Gastrocnemius medialis (tissue), 4 donors: ENCODE measurements at regions of chr6 and their contacts with region 1.

Region 1: DNA sequence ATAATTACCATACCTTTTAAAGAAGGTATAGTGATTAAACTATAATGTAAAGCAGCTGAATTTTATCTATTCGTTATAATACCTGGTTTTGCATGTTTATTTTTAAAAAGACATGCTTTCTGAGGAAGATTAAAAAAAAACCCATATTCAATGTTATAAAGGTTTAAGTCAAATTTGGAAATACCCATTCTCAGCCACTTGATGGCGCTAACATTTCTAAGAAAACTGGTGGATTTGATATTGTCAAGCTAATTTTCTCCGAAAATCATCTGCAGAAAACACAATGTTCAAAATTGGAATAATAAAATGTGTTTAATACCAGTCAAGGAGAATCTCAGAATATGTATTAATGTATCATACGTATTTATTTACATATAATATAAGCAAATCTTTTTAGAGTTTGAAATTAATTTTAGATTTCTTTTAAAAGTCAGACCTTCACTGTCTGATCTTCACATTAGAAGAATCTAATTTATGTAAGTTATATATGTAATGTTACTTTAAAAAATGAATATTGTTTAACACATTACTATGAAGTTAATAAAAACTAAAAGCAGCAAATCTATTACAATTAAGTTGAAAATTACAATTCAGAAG is 35.0 kb downstream of the SHPRH start:
- DNase-seq: no peak
- ATAC-seq: no peak
- H3K4me3 ChIP-seq: no peak overlapping the region
- H3K27ac ChIP-seq: no peak overlapping the region
- H3K4me1 ChIP-seq: no peaks in the 10 kb centered on the region
- H3K27me3 ChIP-seq: no peaks in the 10 kb centered on the region
- CTCF ChIP-seq: peak in 4 of 5 experiments; percentile 34 to 59 (median 52)
- POLR2A ChIP-seq: no peak

Region 2: DNA sequence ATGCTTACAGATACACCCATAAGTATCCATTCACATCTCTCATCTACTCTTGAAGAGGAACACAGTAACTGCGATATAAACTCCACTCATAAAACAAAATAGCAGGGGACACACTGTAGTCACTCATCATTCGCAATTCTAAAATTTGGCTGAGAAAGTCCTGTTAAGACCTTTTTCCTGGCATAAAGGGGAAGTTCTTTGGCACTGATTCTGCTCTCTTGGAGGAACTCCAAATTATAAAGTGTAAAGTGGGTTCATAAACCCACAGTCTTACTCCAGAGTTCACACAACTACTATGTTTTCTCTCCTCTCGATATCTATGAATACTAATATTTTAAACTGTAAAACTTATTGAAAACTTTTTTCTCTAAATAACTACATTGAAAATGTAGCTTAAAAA is 750.3 kb after region 1 on chr6:
- in situ Hi-C with region 1: loop called in 2 of 4 experiments (anchors 25 kb)
- intact Hi-C with region 1: no loop called
- DNase-seq: no peak
- ATAC-seq: no peak
- H3K4me3 ChIP-seq: no peak overlapping the region
- H3K27ac ChIP-seq: no peak overlapping the region
- H3K4me1 ChIP-seq: no peaks in the 10 kb centered on the region
- H3K27me3 ChIP-seq: no peaks in the 10 kb centered on the region
- CTCF ChIP-seq: no peak
- POLR2A ChIP-seq: no peak

Region 3: GRCh38 chr6:146700078-146700686 is 771.0 kb after region 1 on chr6:
- in situ Hi-C with region 1: loop called in 2 of 4 experiments (anchors 25 kb)
- intact Hi-C with region 1: loop called (anchors 5 kb)
- DNase-seq: peak; percentile 46 to 50
- ATAC-seq: peak; percentile 72 to 77
- H3K4me3 ChIP-seq: no peak overlapping the region
- H3K27ac ChIP-seq: no peak overlapping the region
- H3K4me1 ChIP-seq: peaks cover 0 to 3% of the 10 kb centered on the region in 2 donors
- H3K27me3 ChIP-seq: no peaks in the 10 kb centered on the region
- CTCF ChIP-seq: peak; percentile 32 to 70 (median 50)
- POLR2A ChIP-seq: no peak